ENCODE measurements at regions of chr3 and their contacts with region 1.

Region 1: DNA sequence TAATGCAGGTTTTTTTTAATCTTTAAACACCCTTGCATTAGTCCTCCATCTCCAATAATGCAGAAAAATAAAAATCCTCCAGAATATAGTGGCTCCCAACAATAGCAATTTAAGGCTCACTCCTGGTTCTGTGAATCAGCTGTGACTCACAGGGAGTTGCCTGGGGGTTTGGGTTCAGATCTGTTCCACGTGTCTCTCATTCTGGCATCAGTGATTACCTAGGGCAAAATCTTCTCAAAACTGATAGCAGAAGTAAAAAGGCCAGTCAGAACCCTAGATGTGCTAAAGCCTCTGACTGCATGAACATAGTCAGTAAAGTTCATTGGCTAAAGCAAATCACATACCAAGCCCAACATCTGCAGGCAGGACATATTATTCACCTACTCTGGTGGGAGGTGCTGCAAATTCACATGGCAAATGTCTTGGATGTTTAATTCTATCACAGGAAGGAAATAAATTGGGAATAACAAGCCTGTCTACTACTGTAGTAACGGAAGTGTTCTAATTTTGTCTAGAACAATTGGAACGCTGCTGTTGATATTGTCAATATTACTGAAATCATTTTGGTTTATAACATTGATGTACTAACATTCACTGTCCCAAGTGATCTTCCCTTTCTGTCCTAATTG is 364.1 kb upstream of the CNTN4 start:
- DNase-seq: no peak
- H3K4me3 ChIP-seq: no peak overlapping the region
- H3K4me3 Mint-ChIP-seq: no peak overlapping the region
- H3K27ac Mint-ChIP-seq: no peak overlapping the region
- H3K4me1 ChIP-seq: no peaks in the 10 kb centered on the region
- H3K4me1 Mint-ChIP-seq: no peaks in the 10 kb centered on the region
- H3K27me3 ChIP-seq: no peaks in the 10 kb centered on the region
- H3K27me3 Mint-ChIP-seq: peaks cover 3% of the 10 kb centered on the region
- CTCF ChIP-seq: no peak

Region 2: GRCh38 chr3:1752205-1752604 is 17.6 kb after region 1 on chr3:
- CTCF ChIA-PET with region 1: no interaction called
- POLR2A ChIA-PET with region 1: no interaction called
- intact Hi-C with region 1: loop called (anchors 1 kb)
- DNase-seq: no peak
- H3K4me3 ChIP-seq: no peak overlapping the region
- H3K4me3 Mint-ChIP-seq: no peak overlapping the region
- H3K27ac Mint-ChIP-seq: no peak overlapping the region
- H3K4me1 ChIP-seq: no peaks in the 10 kb centered on the region
- H3K4me1 Mint-ChIP-seq: no peaks in the 10 kb centered on the region
- H3K27me3 ChIP-seq: no peaks in the 10 kb centered on the region
- H3K27me3 Mint-ChIP-seq: peaks cover 3% of the 10 kb centered on the region
- CTCF ChIP-seq: no peak

Measured in Caco-2 (cell line).